Activated CD4-positive, alpha-beta T cell treated with anti-CD3 and anti-CD28 coated beads, Interleukin-2, amount 10 ng/mL, durations not matched to agents 7 days and 5 days (primary cell): ENCODE measurements at regions of chr10 and their contacts with region 1.

Region 1: GRCh38 chr10:102225646-102226541 is at the start of gene ELOVL3:
- DNase-seq: peak; percentile 87
- H3K4me3 Mint-ChIP-seq: peak within 1 kb of the TSS; percentile 42
- H3K27ac Mint-ChIP-seq: no peak within 1 kb of the TSS
- H3K4me1 Mint-ChIP-seq: peaks cover 24% of the 10 kb centered on the region
- H3K27me3 Mint-ChIP-seq: peaks cover 59% of the 10 kb centered on the region
- total RNA-seq, gene ELOVL3: not detected

Region 2: DNA sequence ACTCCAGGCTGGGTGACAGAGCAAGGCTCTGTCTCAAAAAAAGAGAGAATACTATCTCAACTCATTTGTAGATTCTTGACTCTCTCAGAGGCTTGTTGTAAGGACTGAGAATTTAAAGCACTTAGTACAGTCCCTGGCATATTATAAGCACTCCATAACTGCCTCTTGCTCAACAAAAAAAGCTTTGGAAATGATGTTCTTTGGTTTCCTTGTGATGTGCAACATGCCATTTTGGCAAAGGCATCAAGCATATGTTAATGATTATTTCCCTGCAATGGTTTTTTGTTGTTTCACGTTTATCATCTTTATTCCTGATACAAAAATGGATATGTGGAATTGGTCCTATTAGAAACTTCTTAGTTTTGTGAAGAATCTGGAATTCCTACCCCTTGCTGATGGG is 58.0 kb before region 1 on chr10:
- CTCF ChIA-PET with region 1: interaction called, 34 read pairs
- POLR2A ChIA-PET with region 1: interaction called, 5 read pairs
- DNase-seq: no peak
- H3K4me3 Mint-ChIP-seq: no peak overlapping the region
- H3K27ac Mint-ChIP-seq: no peak overlapping the region
- H3K4me1 Mint-ChIP-seq: peaks cover 24% of the 10 kb centered on the region
- H3K27me3 Mint-ChIP-seq: no peaks in the 10 kb centered on the region

Region 3: GRCh38 chr10:102342958-102343357 is 117.1 kb after region 1 on chr10:
- CTCF ChIA-PET with region 1: interaction called, 170 read pairs
- POLR2A ChIA-PET with region 1: no interaction called
- DNase-seq: no peak
- H3K4me3 Mint-ChIP-seq: no peak overlapping the region
- H3K27ac Mint-ChIP-seq: no peak overlapping the region
- H3K4me1 Mint-ChIP-seq: peaks cover 2% of the 10 kb centered on the region
- H3K27me3 Mint-ChIP-seq: no peaks in the 10 kb centered on the region

Region 4: GRCh38 chr10:102394079-102394800 is 168.3 kb after region 1 on chr10:
- CTCF ChIA-PET with region 1: interaction called, 118 read pairs
- POLR2A ChIA-PET with region 1: no interaction called
- DNase-seq: peak; percentile 98
- H3K4me3 Mint-ChIP-seq: peak overlapping the region; percentile 92
- H3K27ac Mint-ChIP-seq: peak overlapping the region; percentile 96
- H3K4me1 Mint-ChIP-seq: peaks cover 45% of the 10 kb centered on the region
- H3K27me3 Mint-ChIP-seq: no peaks in the 10 kb centered on the region

Region 5: DNA sequence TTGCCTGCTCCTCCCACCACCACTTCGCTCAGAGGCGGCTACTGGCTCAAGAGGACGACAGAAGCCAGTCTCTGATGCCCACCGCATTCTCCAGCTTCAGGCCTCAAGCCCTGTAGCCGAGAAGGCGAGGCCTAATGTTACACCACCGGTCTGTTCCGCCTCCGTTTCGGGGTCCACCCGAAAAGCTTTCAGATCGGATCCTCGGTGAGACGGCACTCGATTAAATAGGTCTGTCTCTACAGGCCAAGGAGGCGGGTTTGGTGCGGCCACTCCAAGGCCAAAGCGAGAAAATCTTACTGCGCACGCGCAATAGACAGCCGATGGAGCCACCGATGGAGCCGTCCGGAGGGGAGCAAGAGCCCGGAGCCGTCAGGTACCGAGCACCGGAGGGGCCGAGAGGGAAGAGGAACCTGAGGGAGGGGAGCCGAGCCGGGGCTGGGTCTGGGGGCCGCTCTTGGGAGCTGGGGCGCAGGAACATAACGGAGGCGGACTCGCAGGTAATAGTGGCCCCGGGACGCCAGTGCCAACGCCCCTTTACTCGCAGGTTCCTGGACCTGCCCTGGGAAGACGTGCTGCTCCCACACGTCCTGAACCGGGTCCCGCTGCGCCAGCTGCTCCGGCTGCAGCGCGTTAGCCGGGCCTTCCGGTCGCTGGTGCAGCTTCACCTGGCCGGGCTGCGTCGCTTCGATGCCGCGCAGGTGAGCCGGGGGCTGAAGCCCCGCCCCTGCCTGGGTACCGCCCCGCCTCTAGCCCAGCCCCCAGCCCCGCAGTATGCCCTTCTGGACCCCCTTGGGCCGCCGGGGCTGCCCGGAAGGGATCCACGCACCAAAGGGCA is 195.1 kb after region 1 on chr10 and contains the start of gene FBXL15:
- CTCF ChIA-PET with region 1: interaction called, 47 read pairs
- POLR2A ChIA-PET with region 1: no interaction called
- DNase-seq: peak; percentile 97
- H3K4me3 Mint-ChIP-seq: peak within 1 kb of the TSS; percentile 90
- H3K27ac Mint-ChIP-seq: peak within 1 kb of the TSS; percentile 95
- H3K4me1 Mint-ChIP-seq: peaks cover 37% of the 10 kb centered on the region
- H3K27me3 Mint-ChIP-seq: peaks cover 18% of the 10 kb centered on the region
- total RNA-seq, gene FBXL15: 8.7 to 11.2 TPM

Region 6: DNA sequence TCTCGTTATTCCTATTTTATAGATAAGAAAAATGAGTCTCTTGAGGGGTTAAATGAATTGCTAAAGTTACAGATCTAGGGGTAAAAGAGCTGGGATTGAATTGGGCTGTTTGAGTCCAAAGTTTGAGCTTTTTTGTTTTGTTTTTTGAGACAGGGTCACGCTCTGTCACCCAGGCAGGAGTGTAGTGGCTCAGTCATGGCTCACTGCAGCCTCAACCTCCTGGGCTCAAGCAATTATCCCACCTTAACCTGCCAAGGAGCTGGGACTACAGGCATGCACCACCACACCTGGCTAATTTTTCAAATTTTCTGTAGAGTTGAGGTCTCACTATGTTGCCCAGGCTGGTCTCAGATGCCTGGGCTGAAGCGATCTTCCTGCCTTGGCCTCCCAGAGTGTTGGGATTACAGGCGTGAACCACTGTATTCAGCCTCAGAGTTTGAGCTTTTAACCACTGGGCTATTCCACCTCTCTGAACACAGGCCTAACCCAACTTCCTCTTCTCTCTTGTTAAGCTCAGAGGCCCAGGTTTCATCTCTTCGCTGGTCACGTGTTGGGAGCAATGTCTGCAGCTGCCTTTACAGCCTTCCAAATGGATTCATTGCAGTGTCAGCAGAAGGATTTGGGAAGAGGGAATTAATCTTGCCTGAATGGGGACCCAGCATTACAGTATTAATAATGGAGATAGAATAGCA is 285.8 kb after region 1 on chr10:
- CTCF ChIA-PET with region 1: no interaction called
- POLR2A ChIA-PET with region 1: no interaction called
- DNase-seq: no peak
- H3K4me3 Mint-ChIP-seq: no peak overlapping the region
- H3K27ac Mint-ChIP-seq: peak overlapping the region; percentile 66
- H3K4me1 Mint-ChIP-seq: peaks cover 29% of the 10 kb centered on the region
- H3K27me3 Mint-ChIP-seq: no peaks in the 10 kb centered on the region

Region 7: DNA sequence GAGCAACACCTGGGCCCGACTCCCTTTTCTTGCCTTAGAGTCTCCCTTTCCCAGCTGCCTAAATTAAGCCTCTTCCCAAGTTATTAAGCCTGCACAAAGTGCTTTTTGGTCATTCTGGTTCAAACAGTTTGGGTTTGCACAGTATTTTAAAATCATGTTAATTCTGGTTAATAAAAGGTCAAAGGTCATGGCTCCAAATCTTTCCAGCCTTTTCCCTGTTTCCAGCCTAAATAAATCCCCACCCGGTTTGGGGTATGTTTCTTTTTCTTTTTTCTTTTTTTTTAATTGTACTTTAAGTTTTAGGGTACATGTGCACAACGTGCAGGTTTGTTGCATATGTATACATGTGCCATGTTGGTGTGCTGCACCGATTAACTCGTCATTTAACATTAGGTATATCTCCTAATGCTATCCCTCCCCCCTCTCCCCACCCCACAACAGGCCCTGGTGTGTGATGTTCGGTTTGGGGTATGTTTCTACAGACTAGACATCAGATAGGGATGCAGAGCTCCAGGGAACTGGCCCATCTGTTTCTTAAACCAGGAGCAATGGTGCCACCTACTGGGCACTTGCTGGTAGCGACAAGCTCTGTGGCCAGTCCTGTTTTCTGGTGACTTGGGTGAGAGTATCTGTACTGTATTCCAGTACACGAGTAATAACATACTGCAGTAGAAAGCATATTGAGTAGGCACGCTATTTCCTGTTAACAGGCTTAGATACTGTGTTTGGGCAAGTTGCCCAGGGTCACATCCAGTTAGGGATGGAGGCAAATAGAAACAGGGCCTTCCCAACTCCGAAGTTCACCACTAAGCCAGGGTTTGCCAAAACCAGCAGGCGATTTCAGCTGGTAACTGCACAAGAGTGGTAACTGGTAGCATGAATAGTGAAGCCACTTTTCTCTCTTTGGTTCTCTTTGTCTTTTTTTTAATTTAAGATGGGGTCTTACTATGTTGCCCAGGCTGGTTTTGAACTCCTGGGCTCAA is 357.8 kb after region 1 on chr10:
- CTCF ChIA-PET with region 1: interaction called, 27 read pairs
- POLR2A ChIA-PET with region 1: no interaction called
- DNase-seq: peak; percentile 89
- H3K4me3 Mint-ChIP-seq: no peak overlapping the region
- H3K27ac Mint-ChIP-seq: no peak overlapping the region
- H3K4me1 Mint-ChIP-seq: peaks cover 14% of the 10 kb centered on the region
- H3K27me3 Mint-ChIP-seq: no peaks in the 10 kb centered on the region